Ovary (tissue), 10 donors: ENCODE measurements at regions of chr15 and their contacts with region 1.

Region 1: GRCh38 chr15:44340410-44340809 is 51.9 kb downstream of the GOLM2 start:
- DNase-seq: no peak
- H3K4me3 ChIP-seq: no peak overlapping the region
- H3K27ac ChIP-seq: no peak overlapping the region
- H3K4me1 ChIP-seq: no peaks in the 10 kb centered on the region
- H3K27me3 ChIP-seq: no peaks in the 10 kb centered on the region
- CTCF ChIP-seq: no peak
- EP300 ChIP-seq: no peak
- POLR2A ChIP-seq: no peak

Region 2: DNA sequence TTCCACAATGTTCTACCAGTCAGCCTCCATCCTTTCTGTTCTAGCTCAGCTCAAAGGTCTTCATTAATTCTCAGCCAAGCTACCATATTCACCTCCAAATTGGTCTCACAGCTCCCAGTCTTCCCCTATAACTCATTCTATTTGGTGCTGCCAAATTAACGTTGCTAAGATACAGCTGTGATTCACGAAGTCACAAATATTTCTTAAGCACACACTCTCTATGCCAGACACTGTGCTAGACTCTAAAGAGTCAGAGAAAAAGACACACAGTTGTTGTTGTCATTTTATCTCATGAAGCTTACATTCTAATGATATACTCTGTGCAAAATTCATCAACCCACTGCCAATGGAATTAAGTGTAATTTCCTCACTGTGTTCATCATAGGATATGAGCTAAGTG is 248.2 kb before region 1 on chr15:
- intact Hi-C with region 1: loop called in 1 of 4 experiments (anchors 5 kb)
- DNase-seq: no peak
- H3K4me3 ChIP-seq: no peak overlapping the region
- H3K27ac ChIP-seq: no peak overlapping the region
- H3K4me1 ChIP-seq: no peaks in the 10 kb centered on the region
- H3K27me3 ChIP-seq: no peaks in the 10 kb centered on the region
- CTCF ChIP-seq: no peak
- EP300 ChIP-seq: no peak
- POLR2A ChIP-seq: no peak